Gastrocnemius medialis (tissue), 4 donors: ENCODE measurements at regions of chr7 and their contacts with region 1.

Region 1: DNA sequence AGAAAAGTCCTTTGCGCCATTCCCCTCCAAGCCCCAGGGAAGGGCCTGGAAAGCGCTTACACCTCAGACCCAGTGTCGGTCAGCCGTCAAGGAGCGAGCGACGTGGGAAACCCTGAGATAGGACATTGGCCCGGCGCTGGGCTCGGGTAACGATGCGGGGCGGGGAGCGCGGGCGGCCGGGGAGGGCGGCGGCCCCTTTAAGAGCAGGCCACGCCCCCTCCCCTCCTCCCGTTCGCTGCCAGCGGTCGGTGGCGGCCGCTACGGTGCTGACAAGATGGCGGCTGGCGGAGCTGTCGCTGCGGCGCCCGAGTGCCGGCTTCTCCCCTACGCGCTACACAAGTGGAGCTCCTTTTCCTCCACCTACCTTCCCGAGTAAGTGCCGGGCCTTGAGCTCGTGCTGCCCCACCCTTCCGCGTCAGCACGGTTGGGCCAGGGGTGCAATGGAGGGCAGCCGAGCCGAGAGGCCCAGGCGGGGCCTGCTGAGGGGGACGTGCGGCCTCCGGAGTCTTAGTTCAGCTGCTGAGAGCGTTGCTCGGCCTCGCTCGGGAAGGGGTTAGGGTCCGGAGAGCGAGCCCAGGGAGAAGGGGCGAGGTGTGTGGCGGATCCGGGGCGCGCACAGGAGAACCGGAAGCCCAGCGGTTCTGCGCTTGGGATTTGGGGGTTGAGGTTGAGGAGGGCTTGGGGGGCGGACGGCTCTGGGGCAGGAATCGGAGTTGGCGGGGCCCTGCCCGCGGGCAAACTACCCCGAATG is at the start of gene MKLN1:
- DNase-seq: peak; percentile 89 to 91
- ATAC-seq: peak; percentile 88 to 92
- H3K4me3 ChIP-seq: peak within 1 kb of the TSS; percentile 94 to 100 (median 98)
- H3K27ac ChIP-seq: peak within 1 kb of the TSS; percentile 98 to 100 (median 100)
- H3K4me1 ChIP-seq: peaks cover 46 to 49% of the 10 kb centered on the region in 2 donors
- H3K27me3 ChIP-seq: no peaks in the 10 kb centered on the region
- CTCF ChIP-seq: no peak
- POLR2A ChIP-seq: peak; percentile 75 to 86
- total RNA-seq, gene MKLN1: 29.1 to 81.1 (median 48.9) TPM

Region 2: GRCh38 chr7:130875265-130875741 is 452.5 kb before region 1 on chr7:
- in situ Hi-C with region 1: no loop called
- intact Hi-C with region 1: loop called (anchors 10 kb)
- DNase-seq: peak in 1 of 2 donors; percentile 61
- ATAC-seq: no peak
- H3K4me3 ChIP-seq: no peak overlapping the region
- H3K27ac ChIP-seq: peak overlapping the region; percentile 89 to 97 (median 94)
- H3K4me1 ChIP-seq: peaks cover 32 to 49% of the 10 kb centered on the region in 2 donors
- H3K27me3 ChIP-seq: no peaks in the 10 kb centered on the region
- CTCF ChIP-seq: peak; percentile 72 to 93 (median 76)
- POLR2A ChIP-seq: no peak

Region 3: GRCh38 chr7:131249003-131249402 is 78.8 kb before region 1 on chr7:
- in situ Hi-C with region 1: no loop called
- intact Hi-C with region 1: loop called (anchors 2 kb)
- DNase-seq: peak; percentile 95 to 97
- ATAC-seq: peak; percentile 91 to 99
- H3K4me3 ChIP-seq: no peak overlapping the region
- H3K27ac ChIP-seq: peak overlapping the region; percentile 66 to 87 (median 72)
- H3K4me1 ChIP-seq: peaks cover 17 to 33% of the 10 kb centered on the region in 2 donors
- H3K27me3 ChIP-seq: no peaks in the 10 kb centered on the region
- CTCF ChIP-seq: no peak
- POLR2A ChIP-seq: peak in 1 of 2 donors; percentile 24